Aorta (tissue), 5 donors: ENCODE measurements at regions of chr2 and their contacts with region 1.

Region 1: GRCh38 chr2:215920244-215921100 is 92.9 kb downstream of the MREG start:
- DNase-seq: peak in 1 of 2 donors; percentile 76
- ATAC-seq: peak; percentile 95
- H3K4me3 ChIP-seq: no peak overlapping the region
- H3K27ac ChIP-seq: no peak overlapping the region
- H3K4me1 ChIP-seq: peaks cover 0 to 6% of the 10 kb centered on the region in 2 donors
- H3K27me3 ChIP-seq: no peaks in the 10 kb centered on the region

Region 2: DNA sequence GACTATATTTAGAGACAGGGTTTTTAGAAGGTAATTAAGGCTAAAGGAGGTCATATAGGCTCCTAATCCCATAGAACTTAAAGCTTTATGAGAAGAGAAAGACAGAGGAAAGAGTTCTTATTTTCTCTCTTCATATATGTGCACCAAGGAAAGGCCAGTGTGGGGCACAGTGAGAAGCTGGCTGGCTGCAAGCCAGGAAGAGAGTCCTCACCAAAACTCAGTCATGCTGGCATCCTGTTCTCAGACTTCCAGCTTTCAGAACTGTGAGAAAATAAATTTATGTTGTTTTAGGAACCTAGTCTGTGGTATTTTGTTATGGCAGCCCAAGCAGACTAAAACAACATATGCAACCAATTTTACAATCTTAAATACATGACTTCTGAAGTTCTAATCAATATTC is 640.1 kb before region 1 on chr2:
- intact Hi-C with region 1: no loop called
- DNase-seq: no peak
- ATAC-seq: no peak
- H3K4me3 ChIP-seq: no peak overlapping the region
- H3K27ac ChIP-seq: no peak overlapping the region
- H3K4me1 ChIP-seq: no peaks in the 10 kb centered on the region
- H3K27me3 ChIP-seq: no peaks in the 10 kb centered on the region

Region 3: DNA sequence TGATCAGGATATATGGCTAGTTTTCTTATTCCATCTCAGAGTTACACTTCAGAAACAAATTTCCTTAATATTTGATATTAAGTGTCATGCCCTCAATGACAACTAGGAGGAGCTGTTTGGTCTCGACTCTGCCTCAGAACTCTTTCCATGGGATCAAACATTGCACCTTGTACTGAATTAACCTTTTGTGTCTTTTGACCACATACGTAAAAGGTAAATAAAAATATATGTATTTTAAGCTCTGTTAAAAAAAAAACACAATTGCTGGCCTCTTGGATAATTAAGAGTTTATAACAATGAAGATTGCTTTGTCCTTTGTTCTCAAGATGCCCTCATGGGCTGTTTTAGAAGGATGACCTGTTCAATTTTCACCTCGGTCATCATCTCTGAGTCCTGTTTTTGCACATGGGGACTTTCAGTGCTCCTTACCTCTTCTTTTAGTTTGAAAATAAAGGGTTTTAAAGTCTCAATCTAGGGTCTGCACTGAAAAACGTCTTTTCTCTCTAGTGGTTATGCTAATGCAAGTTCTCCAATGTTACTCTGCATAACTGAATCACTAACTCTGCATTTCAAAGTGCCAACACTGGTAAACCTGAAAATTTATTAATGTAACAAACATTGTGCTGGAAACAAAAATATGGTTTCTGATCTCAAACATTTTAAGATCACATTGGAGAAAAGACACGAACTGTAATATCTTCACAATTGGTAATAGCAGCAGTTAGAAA is 465.8 kb before region 1 on chr2:
- intact Hi-C with region 1: loop called (anchors 2 to 5 kb)
- DNase-seq: no peak
- ATAC-seq: peak; percentile 86
- H3K4me3 ChIP-seq: no peak overlapping the region
- H3K27ac ChIP-seq: no peak overlapping the region
- H3K4me1 ChIP-seq: no peaks in the 10 kb centered on the region
- H3K27me3 ChIP-seq: no peaks in the 10 kb centered on the region

Region 4: GRCh38 chr2:215758691-215759090 is 161.8 kb before region 1 on chr2:
- intact Hi-C with region 1: no loop called
- DNase-seq: no peak
- ATAC-seq: no peak
- H3K4me3 ChIP-seq: no peak overlapping the region
- H3K27ac ChIP-seq: no peak overlapping the region
- H3K4me1 ChIP-seq: peaks cover 2 to 5% of the 10 kb centered on the region in 2 donors
- H3K27me3 ChIP-seq: no peaks in the 10 kb centered on the region

Region 5: GRCh38 chr2:215843579-215843978 is 76.9 kb before region 1 on chr2:
- intact Hi-C with region 1: loop called (anchors 5 kb)
- DNase-seq: peak in 1 of 2 donors; percentile 59
- ATAC-seq: peak; percentile 83
- H3K4me3 ChIP-seq: no peak overlapping the region
- H3K27ac ChIP-seq: peak overlapping the region; percentile 11 to 13
- H3K4me1 ChIP-seq: peaks cover 0 to 3% of the 10 kb centered on the region in 2 donors
- H3K27me3 ChIP-seq: no peaks in the 10 kb centered on the region